H1 (cell line): ENCODE measurements at regions of chr16 and their contacts with region 1.

Region 1: GRCh38 chr16:70162041-70162451 is 11.5 kb upstream of the CLEC18C start:
- DNase-seq: no peak
- H3K4me3 ChIP-seq: no peak overlapping the region
- H3K27ac ChIP-seq: no peak overlapping the region
- H3K4me1 ChIP-seq: no peaks in the 10 kb centered on the region
- H3K27me3 ChIP-seq: no peaks in the 10 kb centered on the region
- CTCF ChIP-seq: no peak
- EP300 ChIP-seq: no peak
- POLR2A ChIP-seq: no peak
- RAD21 ChIP-seq: no peak

Region 2: GRCh38 chr16:70151391-70151790 is 10.7 kb before region 1 on chr16:
- CTCF ChIA-PET with region 1: interaction called, 10 read pairs
- POLR2A ChIA-PET with region 1: interaction called, 4 read pairs
- DNase-seq: no peak
- H3K4me3 ChIP-seq: no peak overlapping the region
- H3K27ac ChIP-seq: no peak overlapping the region
- H3K4me1 ChIP-seq: no peaks in the 10 kb centered on the region
- H3K27me3 ChIP-seq: no peaks in the 10 kb centered on the region
- CTCF ChIP-seq: no peak
- EP300 ChIP-seq: no peak
- POLR2A ChIP-seq: no peak
- RAD21 ChIP-seq: no peak